BJ (cell line): ENCODE measurements at regions of chr2 and their contacts with region 1.

Region 1: DNA sequence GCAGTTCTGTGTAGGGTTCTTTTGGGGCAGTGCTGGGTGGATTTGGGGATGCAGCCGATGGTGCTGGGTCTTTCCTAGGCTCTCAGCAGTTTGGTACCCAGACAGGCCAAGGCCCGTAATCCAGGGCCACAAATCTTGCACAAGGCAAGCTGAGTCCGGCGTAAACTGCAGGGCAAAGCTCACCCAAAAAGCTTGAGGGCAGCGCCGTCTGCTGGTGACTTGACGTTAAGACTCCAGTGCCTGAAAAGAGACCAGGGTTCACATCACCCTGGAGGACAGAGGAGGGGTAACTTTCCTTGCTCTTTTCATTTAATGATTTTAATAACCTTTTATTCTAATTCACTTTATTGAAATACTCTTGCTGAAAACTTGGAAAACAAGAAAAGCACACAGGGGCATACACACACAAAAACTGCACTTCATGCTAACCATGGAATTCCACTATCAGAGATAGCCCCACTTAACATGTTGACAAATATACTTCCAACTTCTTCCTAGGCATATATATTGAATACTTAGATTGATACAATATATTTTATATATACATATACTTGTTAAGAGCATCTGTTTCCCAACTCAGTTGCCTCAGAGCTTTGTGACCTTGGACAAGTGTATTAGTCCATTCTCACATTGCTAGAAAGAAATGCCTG is 38.9 kb downstream of the CNGA3 start:
- DNase-seq: no peak
- H3K4me3 ChIP-seq: no peak overlapping the region
- H3K27me3 ChIP-seq: no peaks in the 10 kb centered on the region; the same call in none of the 2 replicates
- CTCF ChIP-seq: peak; percentile 98

Region 2: GRCh38 chr2:97740590-97741182 is 644.5 kb before region 1 on chr2:
- CTCF ChIA-PET with region 1: interaction called, 13 read pairs
- POLR2A ChIA-PET with region 1: no interaction called
- DNase-seq: no peak
- H3K4me3 ChIP-seq: no peak overlapping the region
- H3K27me3 ChIP-seq: no peaks in the 10 kb centered on the region
- CTCF ChIP-seq: peak; percentile 77

Region 3: GRCh38 chr2:97806738-97807618 is 578.2 kb before region 1 on chr2:
- CTCF ChIA-PET with region 1: interaction called, 26 read pairs
- POLR2A ChIA-PET with region 1: no interaction called
- DNase-seq: peak; percentile 4
- H3K4me3 ChIP-seq: no peak overlapping the region
- H3K27me3 ChIP-seq: no peaks in the 10 kb centered on the region
- CTCF ChIP-seq: peak; percentile 95

Region 4: GRCh38 chr2:98356729-98357128 is 28.4 kb before region 1 on chr2:
- CTCF ChIA-PET with region 1: no interaction called
- POLR2A ChIA-PET with region 1: no interaction called
- DNase-seq: no peak
- H3K4me3 ChIP-seq: no peak overlapping the region
- H3K27me3 ChIP-seq: no peaks in the 10 kb centered on the region
- CTCF ChIP-seq: no peak